ENCODE measurements at regions of chr9 and their contacts with region 1.

Region 1: DNA sequence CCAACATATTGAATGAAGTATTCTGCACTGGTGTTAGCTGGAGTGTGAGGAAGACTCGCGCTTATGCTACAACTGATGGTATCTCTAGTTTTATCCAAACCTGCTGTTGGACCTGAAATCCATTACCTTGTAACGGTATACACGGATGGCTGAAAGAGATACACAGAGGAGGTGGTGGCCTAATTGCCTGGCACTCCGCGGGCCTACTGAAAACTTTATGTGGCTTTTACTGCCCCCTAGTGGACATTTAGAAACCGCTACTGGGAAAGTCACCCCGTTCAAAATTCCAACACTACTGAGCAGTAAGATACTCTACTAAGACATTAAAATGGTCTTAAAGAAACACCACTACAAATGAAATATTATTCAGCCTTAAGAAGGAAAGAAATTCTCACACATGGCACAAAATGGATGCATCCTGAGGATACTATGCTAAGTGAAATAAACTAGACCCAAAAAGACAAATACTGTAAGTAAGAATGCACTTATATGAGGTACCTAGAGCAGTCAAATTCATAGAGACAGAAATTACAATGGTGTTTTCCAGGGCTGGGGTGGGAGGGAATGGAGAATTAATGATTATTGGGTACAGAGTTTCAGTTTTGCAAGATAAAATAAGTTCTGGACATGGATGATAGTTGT is 100.4 kb downstream of the TTLL11 start:
- DNase-seq: peak in 1 of 2 donors; percentile 53
- H3K4me3 ChIP-seq: no peak overlapping the region
- H3K27ac ChIP-seq: no peak overlapping the region
- H3K4me1 ChIP-seq: peaks cover 0 to 5% (median 2%) of the 10 kb centered on the region in 4 donors
- H3K27me3 ChIP-seq: no peaks in the 10 kb centered on the region
- CTCF ChIP-seq: peak; percentile 79 to 85

Region 2: DNA sequence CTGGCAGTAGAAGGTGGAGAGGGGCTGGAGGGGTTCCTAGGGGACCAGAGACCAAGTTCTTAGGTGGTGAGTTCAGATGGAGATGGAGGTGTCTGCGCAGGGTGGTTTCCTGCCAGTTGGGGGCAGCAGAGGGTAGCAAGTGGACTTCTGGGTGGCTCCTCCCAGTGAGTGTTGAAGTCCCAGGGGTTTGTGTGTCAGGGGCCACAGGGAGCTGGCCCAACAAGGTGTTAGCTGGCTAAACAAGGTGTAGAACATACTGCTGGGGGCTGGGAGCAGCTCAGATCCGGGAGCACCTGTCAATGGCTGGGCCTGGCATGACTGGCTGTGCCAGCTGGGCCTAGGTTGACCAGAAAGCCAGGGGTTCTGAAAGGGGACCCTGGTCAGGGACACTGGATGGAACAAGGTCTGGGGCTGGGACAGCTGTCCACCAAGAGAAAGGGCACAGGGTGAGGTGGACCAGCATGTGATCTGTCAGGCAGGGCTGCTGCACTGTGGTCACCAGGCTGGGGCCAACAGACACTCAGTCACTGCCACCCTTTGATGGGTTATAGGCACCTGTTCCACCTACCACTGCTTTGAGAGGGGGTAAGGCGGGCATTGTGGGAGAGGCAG is 305.7 kb before region 1 on chr9:
- intact Hi-C with region 1: loop called (anchors 5 kb)
- DNase-seq: peak; percentile 74 to 87
- H3K4me3 ChIP-seq: no peak overlapping the region
- H3K27ac ChIP-seq: peak overlapping the region in 1 of 2 donors; percentile 9
- H3K4me1 ChIP-seq: peaks cover 0 to 13% (median 7%) of the 10 kb centered on the region in 4 donors
- H3K27me3 ChIP-seq: no peaks in the 10 kb centered on the region
- CTCF ChIP-seq: peak; percentile 82 to 91

Region 3: DNA sequence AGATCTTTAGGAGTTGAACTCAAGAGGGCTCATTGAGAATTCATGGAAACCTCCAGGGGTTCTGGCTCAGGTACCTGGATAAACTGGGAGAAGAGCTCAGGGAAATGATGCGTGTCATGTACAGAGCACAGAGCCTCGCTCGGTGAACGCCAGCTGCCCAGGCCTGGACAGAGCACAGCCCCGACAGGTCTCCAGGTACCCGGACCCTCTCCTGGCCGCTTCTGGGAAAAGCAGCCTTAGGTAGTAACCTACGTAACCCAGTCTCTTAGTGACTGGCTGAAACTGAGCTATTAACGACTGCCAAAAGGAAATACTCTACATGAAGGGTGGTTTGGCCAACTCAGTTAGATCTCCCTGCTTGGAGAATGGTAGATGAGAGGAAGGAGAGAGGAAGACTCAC is 57.0 kb before region 1 on chr9:
- intact Hi-C with region 1: no loop called
- DNase-seq: no peak
- H3K4me3 ChIP-seq: no peak overlapping the region
- H3K27ac ChIP-seq: no peak overlapping the region
- H3K4me1 ChIP-seq: no peaks in the 10 kb centered on the region
- H3K27me3 ChIP-seq: no peaks in the 10 kb centered on the region
- CTCF ChIP-seq: no peak

Measured in tibial artery (tissue), 4 donors.